ENCODE measurements at regions of chr3 and their contacts with region 1.

Region 1: DNA sequence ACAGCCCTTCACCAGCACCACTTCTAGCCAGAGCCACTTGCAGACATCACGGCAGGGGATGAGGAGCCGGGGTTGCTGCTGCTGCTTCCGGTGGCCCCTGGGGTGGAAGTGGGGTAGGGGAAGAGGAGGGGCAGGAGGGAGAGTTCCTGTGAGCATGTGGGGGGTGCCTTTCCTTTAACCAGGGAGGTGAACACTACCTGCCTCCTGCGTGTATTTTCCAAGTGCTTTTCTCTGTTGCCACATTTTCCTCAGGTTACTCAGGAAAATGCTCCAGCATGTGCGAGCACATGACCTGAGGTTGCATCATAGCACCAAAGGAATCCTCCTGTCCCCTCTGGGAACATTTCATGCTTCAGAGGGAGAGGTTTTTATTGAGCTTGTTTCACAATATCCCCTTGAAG is 12.2 kb upstream of the SACM1L start:
- DNase-seq: no peak
- CTCF ChIP-seq: no peak

Region 2: GRCh38 chr3:45593708-45594609 is 83.1 kb before region 1 on chr3:
- CTCF ChIA-PET with region 1: no interaction called
- POLR2A ChIA-PET with region 1: no interaction called
- DNase-seq: peak; percentile 89
- CTCF ChIP-seq: no peak

Region 3: GRCh38 chr3:45665101-45665572 is 11.9 kb before region 1 on chr3:
- CTCF ChIA-PET with region 1: interaction called, 17 read pairs
- POLR2A ChIA-PET with region 1: no interaction called
- DNase-seq: peak; percentile 46
- CTCF ChIP-seq: peak; percentile 50